ENCODE measurements at regions of chr16 and their contacts with region 1.

Region 1: DNA sequence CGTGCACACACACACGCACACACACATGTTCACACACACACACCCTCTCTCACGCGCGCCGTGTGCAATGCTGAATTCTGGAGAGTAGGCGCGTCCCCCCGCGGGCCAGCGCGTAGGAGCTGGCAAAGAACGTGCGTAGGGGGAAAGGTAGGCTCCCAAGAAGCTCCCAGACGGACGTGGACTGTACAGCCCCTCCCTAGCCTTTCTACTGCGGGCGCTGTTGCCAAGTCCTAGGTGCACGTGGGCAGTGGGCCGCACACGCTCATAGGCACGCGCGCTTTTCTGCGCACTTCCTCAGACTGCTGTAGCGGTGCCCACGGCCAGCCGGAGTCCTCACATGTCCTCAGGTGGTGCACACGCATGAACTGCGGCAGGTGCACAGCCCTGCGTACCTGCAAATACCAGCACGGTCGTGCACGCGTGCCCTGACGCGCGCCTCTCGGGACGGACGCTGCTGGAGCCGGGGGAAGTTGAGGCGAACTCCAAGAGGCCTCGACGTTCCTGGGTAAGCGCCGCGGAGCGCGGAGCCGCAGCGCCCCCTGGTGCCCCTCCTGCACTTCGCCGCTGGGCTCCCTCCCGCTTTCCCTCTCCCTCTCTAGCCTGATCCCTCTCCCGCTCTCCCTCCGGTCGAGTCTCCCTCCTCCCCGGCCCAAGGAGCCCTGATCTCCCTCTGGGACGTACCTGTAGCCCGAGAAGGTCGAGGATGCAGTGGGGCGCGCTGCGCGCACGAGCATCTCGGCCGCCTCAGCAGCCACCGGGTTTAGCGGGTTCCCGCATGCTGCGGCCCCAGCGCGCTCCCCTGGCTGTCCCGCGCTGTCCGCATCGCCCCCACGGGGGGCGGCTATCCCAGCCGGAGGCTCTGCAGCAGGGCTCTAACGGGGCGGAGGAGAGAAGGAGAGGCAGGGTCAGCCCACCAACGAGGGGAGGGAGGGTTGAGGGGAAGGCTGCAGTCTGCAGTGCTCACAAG is 749 bp downstream of the GRIN2A start:
- DNase-seq: peak; percentile 61 to 94 (median 86)

Region 2: DNA sequence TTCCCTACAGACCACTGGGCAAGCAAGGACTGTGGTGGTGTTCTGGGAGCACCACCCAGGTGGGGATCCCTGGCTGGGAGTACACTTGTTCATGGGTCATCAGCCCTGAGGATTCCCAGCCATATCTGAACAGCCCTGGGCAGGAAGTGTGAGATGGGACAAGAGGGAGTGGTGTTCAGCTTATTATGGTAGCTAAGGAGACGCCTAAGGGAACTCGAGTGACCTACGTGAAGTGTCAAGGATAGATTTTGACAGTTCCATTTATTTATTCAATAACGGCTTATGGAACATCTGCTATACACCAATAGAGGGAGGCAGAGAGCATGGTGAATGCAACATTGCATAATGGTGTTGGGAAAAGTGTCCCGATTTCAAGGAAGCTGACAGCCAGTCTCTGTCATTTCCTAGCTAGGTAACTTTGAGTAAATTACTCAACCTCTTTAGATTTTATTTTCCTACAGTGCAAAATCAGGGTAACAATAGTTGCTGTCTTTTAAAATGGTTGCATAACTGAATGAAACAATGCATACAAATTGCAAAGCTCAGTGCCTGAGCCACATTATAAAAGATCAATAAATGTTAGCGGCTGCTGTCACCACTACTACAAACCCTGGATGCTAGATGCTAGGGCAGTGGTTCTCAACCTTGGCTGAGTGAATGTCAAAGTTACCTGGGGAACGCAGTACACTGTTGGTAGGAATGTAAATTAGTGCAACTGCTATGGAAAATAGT is 533.3 kb before region 1 on chr16:
- intact Hi-C with region 1: loop called (anchors 5 kb)
- DNase-seq: peak in 22 of 42 donors; percentile 6 to 72 (median 32)

Region 3: GRCh38 chr16:10039220-10040096 is 142.0 kb before region 1 on chr16:
- intact Hi-C with region 1: loop called (anchors 10 kb)
- DNase-seq: peak; percentile 39 to 90 (median 68)

Region 4: DNA sequence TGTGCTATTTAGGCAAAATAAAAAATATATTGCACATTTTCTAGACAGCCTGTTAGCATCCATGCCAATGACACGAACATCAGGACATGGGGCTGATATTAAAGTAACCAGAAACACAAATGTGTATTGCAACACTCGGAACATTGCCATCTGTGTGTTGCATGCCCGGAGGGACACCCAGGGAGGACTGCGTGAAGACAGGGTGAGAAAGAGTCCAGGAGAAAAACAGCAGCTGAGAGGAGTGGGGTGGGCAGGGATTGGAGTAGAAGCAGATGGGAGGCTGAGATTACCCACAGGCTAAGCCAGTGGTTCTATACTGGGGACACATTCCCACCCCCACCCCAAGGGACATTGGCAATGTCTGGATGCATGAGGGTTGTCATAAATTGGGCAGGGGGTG is 114.1 kb before region 1 on chr16:
- intact Hi-C with region 1: no loop called
- DNase-seq: no peak

Region 5: GRCh38 chr16:10280262-10281170 is 99.0 kb after region 1 on chr16:
- intact Hi-C with region 1: no loop called
- DNase-seq: no peak